ENCODE measurements at regions of chr3 and their contacts with region 1.

Region 1: GRCh38 chr3:172039436-172040077 is at the start of gene FNDC3B:
- DNase-seq: peak; percentile 94
- H3K4me3 Mint-ChIP-seq: peak within 1 kb of the TSS; percentile 95
- H3K27ac Mint-ChIP-seq: peak within 1 kb of the TSS; percentile 84
- H3K4me1 Mint-ChIP-seq: peaks cover 24% of the 10 kb centered on the region
- H3K27me3 Mint-ChIP-seq: no peaks in the 10 kb centered on the region
- CTCF ChIP-seq: no peak
- total RNA-seq, gene FNDC3B: 149 TPM in 2 replicates

Region 2: DNA sequence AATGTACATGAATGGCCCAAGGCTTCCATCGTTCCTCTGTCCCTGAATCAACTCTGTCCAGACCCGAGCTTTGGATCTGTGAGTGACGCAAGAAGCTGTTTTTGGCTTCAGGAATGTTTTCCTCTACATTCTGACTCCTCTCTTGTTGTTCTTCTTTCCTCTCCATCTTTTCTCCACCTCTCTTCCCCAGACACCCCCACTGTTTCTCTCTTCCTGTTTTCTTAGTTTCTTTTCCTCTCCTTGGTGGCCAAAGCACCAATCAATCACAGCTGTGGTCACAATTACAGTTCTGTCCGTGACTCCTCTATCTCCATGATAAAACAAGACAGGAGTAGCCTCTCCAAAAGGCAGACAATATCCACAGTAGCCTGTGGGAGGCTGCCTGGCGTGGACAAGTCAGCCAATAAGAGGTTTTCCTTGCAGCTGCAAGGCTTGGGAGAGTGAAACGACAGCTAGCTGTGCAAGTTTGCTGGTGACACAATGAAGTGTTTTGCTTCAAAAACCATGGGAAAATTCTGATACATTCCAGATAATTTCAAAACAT is 201.3 kb before region 1 on chr3:
- CTCF ChIA-PET with region 1: interaction called, 7 read pairs
- POLR2A ChIA-PET with region 1: interaction called, 3 read pairs
- intact Hi-C with region 1: loop called (anchors 1 kb)
- DNase-seq: peak; percentile 65
- H3K4me3 Mint-ChIP-seq: peak overlapping the region; percentile 53
- H3K27ac Mint-ChIP-seq: peak overlapping the region; percentile 73
- H3K4me1 Mint-ChIP-seq: peaks cover 8% of the 10 kb centered on the region
- H3K27me3 Mint-ChIP-seq: no peaks in the 10 kb centered on the region
- CTCF ChIP-seq: no peak

Region 3: GRCh38 chr3:172057059-172057458 is 17.5 kb after region 1 on chr3:
- CTCF ChIA-PET with region 1: interaction called, 4 read pairs
- POLR2A ChIA-PET with region 1: interaction called, 11 read pairs
- intact Hi-C with region 1: no loop called
- DNase-seq: no peak
- H3K4me3 Mint-ChIP-seq: no peak overlapping the region
- H3K27ac Mint-ChIP-seq: peak overlapping the region; percentile 91
- H3K4me1 Mint-ChIP-seq: peaks cover 25% of the 10 kb centered on the region
- H3K27me3 Mint-ChIP-seq: no peaks in the 10 kb centered on the region
- CTCF ChIP-seq: no peak

Region 4: DNA sequence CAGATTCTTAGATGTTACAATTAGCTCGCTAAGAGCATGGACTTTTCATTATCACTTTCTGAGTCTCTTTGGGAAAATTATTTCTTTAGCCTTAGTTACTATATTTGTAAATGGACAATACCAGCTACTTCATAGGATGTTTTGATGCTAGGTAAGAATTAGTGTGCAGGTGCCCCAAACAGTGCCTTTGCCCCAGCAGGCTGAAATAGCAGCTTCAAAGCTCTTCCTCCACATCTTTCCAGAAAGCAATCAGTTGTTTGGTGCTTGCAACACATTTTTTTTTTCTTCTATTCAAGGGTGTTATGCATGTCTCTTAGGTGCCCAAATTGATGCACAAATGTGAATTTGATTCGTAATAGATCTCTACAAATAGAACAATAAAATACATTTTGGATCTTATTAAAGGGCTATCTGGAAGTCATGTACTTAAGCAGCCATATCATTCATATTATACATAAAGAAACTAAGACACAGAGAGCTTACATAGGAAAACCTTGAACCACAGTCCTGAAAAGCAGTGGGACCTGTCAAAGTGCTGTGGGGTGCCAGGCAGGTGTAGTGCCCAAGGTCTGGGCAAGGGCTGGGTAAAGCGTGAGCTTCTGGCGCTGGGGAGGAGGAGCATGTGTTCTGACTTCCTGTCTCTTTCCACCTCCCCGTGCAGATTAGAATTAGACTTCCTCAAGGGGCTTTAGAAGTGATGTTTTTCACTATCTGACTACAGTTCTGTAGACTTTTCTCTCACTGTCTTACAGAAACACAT is 62.7 kb after region 1 on chr3:
- CTCF ChIA-PET with region 1: interaction called, 3 read pairs
- POLR2A ChIA-PET with region 1: interaction called, 39 read pairs
- intact Hi-C with region 1: loop called (anchors 5 kb)
- DNase-seq: no peak
- H3K4me3 Mint-ChIP-seq: no peak overlapping the region
- H3K27ac Mint-ChIP-seq: peak overlapping the region; percentile 76
- H3K4me1 Mint-ChIP-seq: peaks cover 48% of the 10 kb centered on the region
- H3K27me3 Mint-ChIP-seq: no peaks in the 10 kb centered on the region
- CTCF ChIP-seq: no peak

Region 5: DNA sequence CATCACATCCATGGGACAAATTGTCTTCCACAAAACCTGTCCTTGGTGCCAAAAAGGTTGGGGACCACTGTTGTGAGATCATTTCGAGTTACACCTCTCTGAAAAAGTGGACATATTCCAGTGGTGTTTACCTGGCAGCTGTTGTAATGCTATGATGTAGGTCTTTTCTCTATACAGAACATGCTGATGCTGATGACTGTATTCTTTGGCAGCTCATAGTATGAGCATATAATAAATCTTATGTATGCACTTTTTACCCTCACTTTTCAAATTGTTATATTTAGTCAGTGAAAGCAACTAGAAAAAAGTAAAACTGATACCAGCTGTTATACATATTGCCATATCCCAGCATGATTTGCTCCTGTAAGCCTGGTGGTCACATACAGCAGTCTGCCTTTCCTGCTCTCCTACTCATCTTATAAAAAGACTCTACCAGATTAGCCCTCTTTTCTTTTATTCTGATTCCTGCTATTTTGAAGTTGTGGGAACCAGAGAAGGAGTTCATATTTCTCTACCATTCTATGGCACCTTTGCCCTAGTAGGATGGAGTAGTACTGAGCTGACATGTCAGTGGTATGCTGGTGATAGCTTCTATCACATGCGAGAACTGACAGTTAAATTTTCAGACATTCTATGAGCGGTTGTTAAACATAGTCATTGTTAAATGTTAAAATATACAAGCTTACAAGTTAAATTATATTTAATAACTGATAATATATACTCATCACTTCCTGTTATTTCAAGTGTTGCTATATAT is 128.5 kb after region 1 on chr3:
- CTCF ChIA-PET with region 1: interaction called, 4 read pairs
- POLR2A ChIA-PET with region 1: interaction called, 25 read pairs
- intact Hi-C with region 1: no loop called
- DNase-seq: no peak
- H3K4me3 Mint-ChIP-seq: no peak overlapping the region
- H3K27ac Mint-ChIP-seq: peak overlapping the region; percentile 96
- H3K4me1 Mint-ChIP-seq: peaks cover 16% of the 10 kb centered on the region
- H3K27me3 Mint-ChIP-seq: no peaks in the 10 kb centered on the region
- CTCF ChIP-seq: no peak

Region 6: DNA sequence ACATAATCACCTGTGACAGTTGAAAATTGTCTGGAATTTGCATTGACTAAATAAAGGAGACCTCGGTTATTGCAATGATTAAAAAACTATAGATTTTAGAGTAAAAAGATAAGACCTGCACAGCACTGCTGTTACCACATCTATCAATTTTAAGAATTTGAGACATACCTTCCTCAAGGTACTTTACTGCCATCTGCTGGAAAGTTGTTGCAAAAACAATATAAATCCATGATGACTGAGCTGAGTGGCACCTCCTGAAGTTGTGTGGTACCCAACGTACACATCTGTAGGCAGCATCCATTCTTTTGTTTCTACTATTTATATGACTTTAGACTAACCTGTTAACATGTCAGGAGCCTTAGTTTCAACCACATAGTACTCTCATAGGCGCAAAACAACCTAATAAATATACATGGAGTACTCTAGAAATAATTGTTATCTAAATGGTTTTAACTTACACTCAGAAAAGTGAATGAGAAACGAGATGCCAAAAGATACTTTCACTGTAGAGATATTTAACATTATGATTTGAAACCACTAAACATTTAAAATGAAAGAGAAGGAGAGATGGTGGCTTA is 302.0 kb after region 1 on chr3:
- CTCF ChIA-PET with region 1: interaction called, 8 read pairs
- POLR2A ChIA-PET with region 1: interaction called, 3 read pairs
- intact Hi-C with region 1: loop called (anchors 1 kb)
- DNase-seq: peak; percentile 67
- H3K4me3 Mint-ChIP-seq: no peak overlapping the region
- H3K27ac Mint-ChIP-seq: no peak overlapping the region
- H3K4me1 Mint-ChIP-seq: no peaks in the 10 kb centered on the region
- H3K27me3 Mint-ChIP-seq: no peaks in the 10 kb centered on the region
- CTCF ChIP-seq: peak; percentile 66